HCT116 (cell line): ENCODE measurements at regions of chr1 and their contacts with region 1.

Region 1: GRCh38 chr1:24932284-24932683 is 2.2 kb upstream of the RUNX3 start:
- DNase-seq: peak; percentile 21
- ATAC-seq: peak; percentile 68
- H3K4me3 ChIP-seq: peak overlapping the region in 1 of 2 experiments; percentile 30; a peak in 2 of 4 replicates
- H3K27ac ChIP-seq: no peak overlapping the region
- H3K4me1 ChIP-seq: peaks cover 4 to 26% of the 10 kb centered on the region in 2 experiments
- H3K27me3 ChIP-seq: no peaks in the 10 kb centered on the region
- CTCF ChIP-seq: peak; percentile 23 to 43 (median 33); a peak in 4 of 6 replicates
- POLR2A ChIP-seq: no peak
- RAD21 ChIP-seq: peak; percentile 61

Region 2: GRCh38 chr1:25037174-25038074 is 105.1 kb after region 1 on chr1:
- CTCF ChIA-PET with region 1: interaction called, 4 read pairs
- POLR2A ChIA-PET with region 1: no interaction called
- RAD21 ChIA-PET with region 1: interaction called in 1 of 2 experiments, 3 read pairs
- intact Hi-C with region 1: loop called (anchors 1 kb)
- DNase-seq: peak; percentile 48
- ATAC-seq: peak; percentile 88
- H3K4me3 ChIP-seq: no peak overlapping the region
- H3K27ac ChIP-seq: no peak overlapping the region
- H3K4me1 ChIP-seq: peaks cover 0 to 8% of the 10 kb centered on the region in 2 experiments; a peak in 2 of 4 replicates
- H3K27me3 ChIP-seq: no peaks in the 10 kb centered on the region
- CTCF ChIP-seq: peak; percentile 77 to 89 (median 85)
- POLR2A ChIP-seq: no peak
- RAD21 ChIP-seq: peak; percentile 58

Region 3: GRCh38 chr1:25099343-25099951 is 167.2 kb after region 1 on chr1:
- CTCF ChIA-PET with region 1: interaction called, 7 read pairs
- POLR2A ChIA-PET with region 1: no interaction called
- RAD21 ChIA-PET with region 1: no interaction called
- intact Hi-C with region 1: loop called (anchors 2 kb)
- DNase-seq: no peak
- ATAC-seq: no peak
- H3K4me3 ChIP-seq: no peak overlapping the region
- H3K27ac ChIP-seq: no peak overlapping the region
- H3K4me1 ChIP-seq: no peaks in the 10 kb centered on the region; a peak in 1 of 4 replicates
- H3K27me3 ChIP-seq: no peaks in the 10 kb centered on the region
- CTCF ChIP-seq: no peak
- POLR2A ChIP-seq: no peak
- RAD21 ChIP-seq: no peak